Thyroid gland (tissue), 4 donors: ENCODE measurements at regions of chr1 and their contacts with region 1.

Region 1: DNA sequence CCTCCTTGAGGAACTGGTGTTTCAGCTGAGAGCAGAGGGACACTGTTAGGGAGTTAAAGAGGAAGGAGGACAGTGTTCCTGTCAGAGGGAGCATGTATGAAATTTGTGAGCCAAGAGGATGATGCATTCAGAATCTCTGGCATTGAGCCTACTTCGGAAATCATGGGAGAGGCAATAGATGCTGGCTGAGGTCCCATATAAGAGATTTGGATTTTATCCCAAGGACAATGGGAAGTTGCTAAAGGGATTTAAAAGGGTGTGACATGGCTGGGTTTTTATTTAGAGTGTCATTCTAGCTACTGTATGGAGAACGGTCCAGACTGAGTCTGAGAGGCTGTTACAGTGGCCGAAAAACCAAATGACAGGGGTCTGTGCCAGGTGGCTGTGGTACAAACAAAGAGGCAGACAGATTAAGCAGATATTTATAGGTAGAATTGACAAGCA is 403.2 kb upstream of the B3GALT2 start:
- DNase-seq: no peak
- H3K4me3 ChIP-seq: no peak overlapping the region
- H3K27ac ChIP-seq: no peak overlapping the region
- H3K4me1 ChIP-seq: peaks cover 0 to 18% of the 10 kb centered on the region in 2 donors
- H3K27me3 ChIP-seq: no peaks in the 10 kb centered on the region
- CTCF ChIP-seq: no peak
- POLR2A ChIP-seq: no peak

Region 2: GRCh38 chr1:193471981-193472380 is 117.6 kb before region 1 on chr1:
- intact Hi-C with region 1: no loop called
- DNase-seq: no peak
- H3K4me3 ChIP-seq: no peak overlapping the region
- H3K27ac ChIP-seq: no peak overlapping the region
- H3K4me1 ChIP-seq: no peaks in the 10 kb centered on the region
- H3K27me3 ChIP-seq: no peaks in the 10 kb centered on the region
- CTCF ChIP-seq: no peak
- POLR2A ChIP-seq: no peak

Region 3: DNA sequence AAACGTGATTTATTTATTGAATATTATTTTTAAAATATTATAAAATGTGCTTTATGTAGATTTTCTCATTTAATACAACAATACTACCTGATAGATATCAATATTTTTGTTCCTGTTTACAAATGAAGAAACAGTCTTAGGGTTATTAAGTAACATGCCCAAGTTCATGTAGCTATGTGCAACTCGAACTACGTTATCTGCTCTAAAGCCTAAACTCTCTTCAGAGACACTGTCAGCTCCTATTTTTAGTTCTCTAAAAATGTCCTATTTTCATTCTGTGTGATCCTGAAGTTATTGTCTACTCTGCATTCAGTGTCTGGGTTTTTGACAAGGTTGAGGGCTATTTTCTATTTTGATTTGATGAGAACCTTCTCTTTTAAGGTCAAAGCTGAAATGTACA is 146.9 kb after region 1 on chr1:
- intact Hi-C with region 1: loop called (anchors 5 kb)
- DNase-seq: no peak
- H3K4me3 ChIP-seq: no peak overlapping the region
- H3K27ac ChIP-seq: no peak overlapping the region
- H3K4me1 ChIP-seq: no peaks in the 10 kb centered on the region
- H3K27me3 ChIP-seq: no peaks in the 10 kb centered on the region
- CTCF ChIP-seq: no peak
- POLR2A ChIP-seq: no peak